ENCODE measurements at regions of chr1 and their contacts with region 1.

Region 1: DNA sequence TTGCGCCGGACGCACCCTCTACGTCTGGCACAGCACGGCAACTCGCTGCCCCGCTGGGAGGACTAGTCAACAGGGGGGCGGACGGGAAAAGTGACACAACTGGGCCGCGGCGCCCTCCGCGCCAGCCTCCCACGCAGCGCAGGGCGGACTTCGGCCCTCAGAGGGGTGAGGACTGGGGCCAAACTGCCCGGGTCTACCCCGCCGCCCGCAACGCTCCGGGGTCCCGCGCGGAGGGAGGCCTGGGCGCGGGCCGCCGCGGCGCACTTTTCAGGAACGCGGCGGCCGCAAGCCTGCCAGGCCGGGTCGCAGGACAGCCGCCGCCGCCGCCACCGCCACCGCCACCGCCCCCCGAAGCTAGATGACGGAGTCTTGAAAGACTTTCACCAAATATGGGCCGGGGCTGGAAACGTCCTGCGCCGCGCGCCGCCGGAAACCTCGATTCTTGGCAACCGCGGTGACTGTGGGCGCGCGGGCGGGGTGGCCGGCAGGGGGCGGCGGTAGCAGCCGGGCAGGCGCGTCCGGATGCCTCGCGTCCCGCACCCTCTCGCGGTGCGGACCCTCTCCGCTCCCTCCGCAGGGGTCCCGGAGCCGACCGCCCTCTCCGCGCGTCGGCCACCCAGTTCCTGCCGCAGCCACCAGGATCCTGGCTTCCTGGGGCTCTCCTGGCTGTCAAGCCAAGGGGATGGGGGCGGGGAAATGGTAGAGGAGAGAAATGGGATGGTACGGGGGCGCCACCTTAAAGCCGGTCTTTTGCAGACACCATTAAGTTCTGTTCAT is 3.7 kb upstream of the CCN1 start:
- DNase-seq: peak; percentile 93

Region 2: GRCh38 chr1:85406887-85407533 is 169.8 kb before region 1 on chr1:
- intact Hi-C with region 1: loop called (anchors 5 kb)
- DNase-seq: no peak

Region 3: DNA sequence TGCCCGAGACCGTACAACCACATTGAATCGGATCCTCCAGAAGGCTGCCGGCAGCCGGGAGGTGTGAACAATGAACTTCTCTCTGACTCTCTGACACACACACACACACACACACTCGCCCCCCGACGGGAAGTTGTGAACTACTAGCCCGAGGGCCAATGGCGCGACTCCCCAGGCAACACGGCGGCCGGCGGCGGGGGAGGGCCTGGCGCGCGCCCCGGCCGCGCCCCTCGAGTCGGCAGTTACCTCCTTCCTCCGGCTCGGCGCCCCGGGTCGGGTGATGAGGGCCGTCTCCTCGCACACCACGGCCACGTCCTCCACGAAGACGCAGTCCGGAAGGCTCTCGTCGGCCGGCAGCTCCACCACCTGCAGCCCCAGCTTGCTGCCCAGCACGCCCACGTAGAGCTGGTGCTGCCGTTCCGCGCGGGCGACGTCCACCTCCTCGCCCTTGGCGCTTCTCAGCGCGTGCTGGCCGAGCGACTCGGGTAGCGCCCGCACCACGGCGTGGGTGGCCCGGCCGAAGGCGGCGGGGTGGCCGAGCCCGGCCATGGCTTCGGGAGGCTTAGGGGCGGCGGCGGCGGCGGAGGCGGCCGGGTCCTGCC is 112.2 kb before region 1 on chr1:
- intact Hi-C with region 1: loop called (anchors 1 kb)
- DNase-seq: peak; percentile 84

Region 4: GRCh38 chr1:85502625-85503083 is 74.2 kb before region 1 on chr1:
- intact Hi-C with region 1: loop called (anchors 2 kb)
- DNase-seq: no peak

Region 5: GRCh38 chr1:85707990-85708828 is 131.4 kb after region 1 on chr1 and contains the start of gene ZNHIT6:
- intact Hi-C with region 1: loop called (anchors 5 kb)
- DNase-seq: peak; percentile 91
- total RNA-seq, gene ZNHIT6: 13.3 TPM